ENCODE measurements at regions of chr11 and their contacts with region 1.

Region 1: DNA sequence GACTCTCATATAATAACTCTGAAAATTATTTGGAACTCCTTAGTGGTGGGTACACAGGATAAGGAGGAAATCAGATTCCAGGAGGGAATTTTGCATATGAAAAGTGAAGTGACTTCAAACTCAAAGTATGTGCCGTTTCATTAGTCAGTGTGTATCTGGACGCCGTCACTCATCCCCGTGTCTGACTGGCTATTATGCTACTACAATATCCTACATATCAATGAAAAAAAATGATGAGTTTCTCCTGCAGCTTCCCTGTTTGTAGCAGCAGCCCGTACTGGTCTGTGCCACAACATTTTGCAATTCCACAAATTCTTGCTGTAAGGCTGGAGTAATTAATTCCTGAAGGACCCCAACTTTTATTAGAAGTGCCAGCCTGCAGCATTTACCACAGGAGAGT is 16.5 kb downstream of the WT1 start:
- DNase-seq: no peak

Region 2: DNA sequence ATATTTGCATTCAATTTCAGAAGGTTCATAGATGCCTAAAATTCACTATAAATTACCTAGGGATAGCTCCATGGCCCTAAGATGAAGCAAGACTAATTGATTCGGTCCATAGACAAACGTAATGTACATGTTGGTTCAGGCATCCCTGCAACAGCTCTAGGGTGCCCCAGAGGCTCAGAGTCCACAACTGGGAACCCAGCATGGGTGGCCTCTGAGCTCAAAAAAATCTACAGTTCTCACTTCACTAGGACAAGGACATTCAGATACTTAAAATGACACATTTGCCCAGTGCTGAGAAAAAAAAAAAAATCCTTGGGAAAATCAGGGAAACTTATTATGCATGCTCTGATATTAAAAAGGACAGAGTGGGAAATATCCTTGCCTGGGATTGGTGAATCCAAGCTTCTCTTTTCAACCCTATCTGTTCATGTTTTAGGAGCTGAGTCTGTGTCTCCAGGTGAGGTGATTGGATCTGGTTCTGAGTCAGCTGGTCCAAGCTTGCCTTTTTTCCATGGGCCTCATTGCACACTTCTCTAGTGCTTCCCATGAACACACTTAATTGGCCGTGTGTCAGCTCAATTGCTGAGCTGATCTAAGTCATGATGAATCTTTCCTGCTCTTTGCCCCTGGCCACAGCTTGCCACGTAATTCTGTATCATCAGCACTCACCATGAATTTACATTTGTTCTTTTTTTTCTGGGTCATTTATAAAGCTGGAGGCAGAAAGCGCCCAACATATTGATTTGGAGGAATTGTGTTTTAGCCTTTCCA is 444.3 kb before region 1 on chr11:
- intact Hi-C with region 1: no loop called
- DNase-seq: no peak

Region 3: DNA sequence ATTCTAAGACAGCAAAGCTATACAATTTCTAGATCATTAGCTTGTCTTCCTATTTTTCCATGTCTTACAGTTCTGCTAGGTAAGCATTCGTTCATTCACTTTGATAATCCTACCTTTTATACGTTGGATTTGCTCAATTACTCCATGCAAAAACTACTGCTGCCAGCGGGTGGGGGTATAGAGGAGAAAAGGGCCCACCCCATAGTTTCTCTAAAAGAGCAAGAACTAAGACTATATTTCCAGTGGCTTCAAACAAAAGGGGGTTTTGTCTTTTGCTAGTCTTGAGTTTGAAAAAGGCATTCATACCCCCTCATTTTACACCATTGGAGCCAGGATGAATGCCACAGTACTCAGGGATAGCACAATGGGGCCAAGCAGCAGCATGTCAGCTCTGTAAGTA is 139.2 kb before region 1 on chr11:
- intact Hi-C with region 1: no loop called
- DNase-seq: no peak

Region 4: DNA sequence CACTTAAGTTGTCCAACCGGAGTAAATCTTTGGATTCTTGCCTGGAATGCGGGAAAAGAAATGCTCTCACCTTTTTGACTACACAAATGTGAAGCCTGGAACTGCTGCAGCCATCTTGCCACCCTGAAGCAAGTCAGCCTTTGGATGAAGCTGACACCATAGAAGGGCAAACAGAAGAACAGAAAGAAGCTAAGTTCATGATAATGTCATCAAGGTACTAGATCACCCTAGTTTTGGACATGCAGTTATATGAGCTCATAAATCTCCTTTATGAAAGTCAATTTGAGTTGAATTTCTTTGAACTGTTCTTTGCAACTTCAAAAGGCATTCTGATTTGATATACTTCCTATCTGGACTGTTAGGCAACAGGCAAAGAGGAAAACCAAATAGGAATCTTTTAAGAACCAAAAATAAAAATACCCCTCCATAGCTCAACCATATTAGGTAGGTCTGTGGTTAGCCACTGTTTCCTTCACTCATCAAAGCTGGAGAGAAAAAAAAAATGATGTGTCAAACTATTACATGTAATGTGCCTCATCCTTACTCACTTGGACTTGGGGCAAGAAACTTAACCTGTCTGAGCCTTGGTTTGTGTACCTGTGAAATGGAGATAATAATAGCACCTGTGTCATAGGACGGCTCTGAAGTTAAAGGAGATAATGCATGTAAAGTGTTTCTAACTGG is 75.4 kb before region 1 on chr11:
- intact Hi-C with region 1: no loop called
- DNase-seq: no peak

Region 5: GRCh38 chr11:32478277-32478731 is 59.5 kb after region 1 on chr11:
- intact Hi-C with region 1: loop called (anchors 10 kb)
- DNase-seq: no peak

Measured in posterior cingulate gyrus (tissue), 11 donors.